Activated CD4-positive, alpha-beta T cell treated with anti-CD3 and anti-CD28 coated beads for 36 hours (primary cell): ENCODE measurements at regions of chr2 and their contacts with region 1.

Region 1: DNA sequence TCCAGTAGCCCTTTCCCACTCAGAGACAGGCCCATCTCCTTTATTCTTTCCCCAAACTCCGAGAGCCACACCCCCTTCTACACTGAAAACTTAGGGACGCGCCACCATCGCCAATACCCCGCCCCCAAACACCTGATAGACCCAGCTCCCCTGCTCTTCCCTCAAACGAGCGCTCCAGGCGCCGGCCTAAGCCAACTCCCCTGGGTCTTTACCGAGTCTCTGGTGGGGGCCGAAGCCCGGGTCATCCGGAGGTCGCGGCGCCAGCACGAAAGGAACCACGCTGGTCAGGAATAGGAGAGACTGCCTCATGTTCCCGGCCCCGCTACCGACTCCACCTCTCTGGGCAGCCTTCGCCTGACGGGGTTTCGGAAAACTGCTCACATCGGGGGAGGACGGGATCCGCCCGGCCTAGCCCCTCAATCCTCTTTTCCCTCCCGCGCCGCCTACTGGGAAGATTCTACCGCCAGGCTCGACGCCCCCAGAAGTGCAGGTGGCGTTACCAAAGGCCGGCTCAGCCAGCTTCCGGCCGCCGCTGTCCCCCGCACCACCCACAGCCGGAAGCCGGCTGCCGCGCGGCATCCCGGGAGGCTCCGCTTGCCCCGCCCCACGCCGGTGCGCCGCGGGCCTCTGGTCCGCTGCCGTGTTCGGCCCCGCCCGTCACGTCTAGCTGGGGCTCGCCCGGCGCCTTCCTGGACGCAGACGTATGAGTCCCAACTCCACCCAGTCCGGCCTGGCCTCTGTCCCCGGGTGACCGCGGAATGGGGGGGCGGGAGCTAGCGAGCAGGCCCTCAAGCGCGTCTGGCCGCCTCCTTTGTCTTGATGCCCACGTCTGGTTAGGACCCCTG is at the start of gene ADAM17:
- DNase-seq: peak; percentile 92
- ATAC-seq: peak; percentile 87
- H3K4me3 Mint-ChIP-seq: peak within 1 kb of the TSS; percentile 97
- H3K27ac Mint-ChIP-seq: peak within 1 kb of the TSS; percentile 95
- H3K4me1 Mint-ChIP-seq: peaks cover 50% of the 10 kb centered on the region
- H3K27me3 Mint-ChIP-seq: no peaks in the 10 kb centered on the region
- total RNA-seq, gene ADAM17: 20.2 to 23.1 TPM

Region 2: DNA sequence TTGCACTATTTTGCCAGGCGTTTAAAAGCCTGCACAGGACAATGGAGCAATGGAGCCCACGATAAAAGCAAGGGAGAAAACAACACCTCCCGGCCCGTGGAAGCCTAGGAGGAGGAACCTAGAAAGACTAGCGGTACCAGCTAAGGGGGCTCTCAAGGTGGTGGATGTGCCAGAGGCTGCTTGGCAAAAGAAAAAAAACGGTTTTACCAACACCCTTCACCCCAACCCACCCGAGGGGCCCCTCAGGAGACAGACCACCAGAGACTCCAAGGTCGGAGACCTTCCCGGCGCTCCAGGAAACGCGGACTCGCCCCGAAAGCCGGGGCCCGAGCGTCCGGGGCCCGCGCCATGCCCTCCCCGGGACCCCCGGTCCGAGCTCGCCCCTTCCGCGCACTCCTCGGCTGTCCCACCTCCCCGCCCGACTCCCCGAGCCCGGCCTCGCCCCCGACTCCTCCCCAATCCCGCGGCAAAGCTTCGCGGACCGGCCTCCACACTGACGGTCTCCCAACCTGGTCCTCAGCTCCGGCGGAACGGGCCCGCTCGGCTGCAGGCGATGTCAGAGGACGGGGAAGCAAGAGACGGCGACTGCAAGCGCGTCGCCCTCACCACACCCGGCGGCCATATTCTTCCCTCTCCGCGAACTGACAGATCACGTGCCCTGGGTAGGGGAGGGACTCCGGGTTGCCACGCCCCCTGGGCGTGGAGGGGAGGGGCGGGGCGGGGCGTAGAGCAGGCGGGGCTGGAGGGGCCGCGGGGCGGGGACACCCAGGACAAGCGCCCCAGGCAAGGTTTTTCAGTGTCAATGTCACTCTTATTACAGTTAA is 718.3 kb before region 1 on chr2 and contains the start of gene KIDINS220:
- CTCF ChIA-PET with region 1: no interaction called
- POLR2A ChIA-PET with region 1: no interaction called
- intact Hi-C with region 1: loop called in 1 of 2 experiments (anchors 5 kb)
- DNase-seq: peak; percentile 92
- ATAC-seq: peak; percentile 95
- H3K4me3 Mint-ChIP-seq: peak within 1 kb of the TSS; percentile 99
- H3K27ac Mint-ChIP-seq: peak within 1 kb of the TSS; percentile 98
- H3K4me1 Mint-ChIP-seq: peaks cover 39% of the 10 kb centered on the region
- H3K27me3 Mint-ChIP-seq: no peaks in the 10 kb centered on the region
- total RNA-seq, gene KIDINS220: 22.7 to 24.4 TPM

Region 3: GRCh38 chr2:9310377-9310776 is 245.1 kb before region 1 on chr2:
- CTCF ChIA-PET with region 1: no interaction called
- POLR2A ChIA-PET with region 1: no interaction called
- intact Hi-C with region 1: no loop called
- DNase-seq: no peak
- ATAC-seq: no peak
- H3K4me3 Mint-ChIP-seq: no peak overlapping the region
- H3K27ac Mint-ChIP-seq: no peak overlapping the region
- H3K4me1 Mint-ChIP-seq: peaks cover 2% of the 10 kb centered on the region
- H3K27me3 Mint-ChIP-seq: no peaks in the 10 kb centered on the region

Region 4: GRCh38 chr2:9474361-9474967 is 81.1 kb before region 1 on chr2 and contains the start of gene IAH1:
- CTCF ChIA-PET with region 1: interaction called, 3 read pairs
- POLR2A ChIA-PET with region 1: no interaction called
- intact Hi-C with region 1: loop called in 1 of 2 experiments (anchors 1 kb)
- DNase-seq: peak; percentile 81
- ATAC-seq: peak; percentile 81
- H3K4me3 Mint-ChIP-seq: peak within 1 kb of the TSS; percentile 79
- H3K27ac Mint-ChIP-seq: peak within 1 kb of the TSS; percentile 75
- H3K4me1 Mint-ChIP-seq: peaks cover 42% of the 10 kb centered on the region
- H3K27me3 Mint-ChIP-seq: no peaks in the 10 kb centered on the region
- total RNA-seq, gene IAH1: 53.7 to 63.7 TPM

Region 5: DNA sequence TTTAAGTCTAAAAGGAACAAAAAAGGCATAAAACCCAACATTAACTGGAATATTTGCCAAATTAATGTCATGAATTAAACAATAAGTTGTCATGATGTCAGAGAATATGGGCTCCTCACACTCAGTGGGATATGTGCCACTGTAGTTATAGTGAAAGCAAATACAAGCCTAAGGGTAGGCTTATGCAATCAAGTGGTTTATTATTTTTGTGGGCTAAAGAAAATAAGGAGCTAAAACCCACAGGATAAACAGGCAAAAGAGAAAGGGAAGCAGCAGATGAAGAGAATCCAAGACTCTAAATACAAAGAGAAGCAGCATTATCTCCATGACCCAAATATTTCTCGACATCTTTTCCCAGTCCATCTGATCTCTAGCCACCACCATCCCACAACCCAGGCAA is 57.8 kb after region 1 on chr2:
- CTCF ChIA-PET with region 1: interaction called, 3 read pairs
- POLR2A ChIA-PET with region 1: interaction called, 10 read pairs
- intact Hi-C with region 1: loop called (anchors 1 to 2 kb)
- DNase-seq: no peak
- ATAC-seq: no peak
- H3K4me3 Mint-ChIP-seq: no peak overlapping the region
- H3K27ac Mint-ChIP-seq: peak overlapping the region; percentile 27
- H3K4me1 Mint-ChIP-seq: peaks cover 95% of the 10 kb centered on the region
- H3K27me3 Mint-ChIP-seq: no peaks in the 10 kb centered on the region

Region 6: DNA sequence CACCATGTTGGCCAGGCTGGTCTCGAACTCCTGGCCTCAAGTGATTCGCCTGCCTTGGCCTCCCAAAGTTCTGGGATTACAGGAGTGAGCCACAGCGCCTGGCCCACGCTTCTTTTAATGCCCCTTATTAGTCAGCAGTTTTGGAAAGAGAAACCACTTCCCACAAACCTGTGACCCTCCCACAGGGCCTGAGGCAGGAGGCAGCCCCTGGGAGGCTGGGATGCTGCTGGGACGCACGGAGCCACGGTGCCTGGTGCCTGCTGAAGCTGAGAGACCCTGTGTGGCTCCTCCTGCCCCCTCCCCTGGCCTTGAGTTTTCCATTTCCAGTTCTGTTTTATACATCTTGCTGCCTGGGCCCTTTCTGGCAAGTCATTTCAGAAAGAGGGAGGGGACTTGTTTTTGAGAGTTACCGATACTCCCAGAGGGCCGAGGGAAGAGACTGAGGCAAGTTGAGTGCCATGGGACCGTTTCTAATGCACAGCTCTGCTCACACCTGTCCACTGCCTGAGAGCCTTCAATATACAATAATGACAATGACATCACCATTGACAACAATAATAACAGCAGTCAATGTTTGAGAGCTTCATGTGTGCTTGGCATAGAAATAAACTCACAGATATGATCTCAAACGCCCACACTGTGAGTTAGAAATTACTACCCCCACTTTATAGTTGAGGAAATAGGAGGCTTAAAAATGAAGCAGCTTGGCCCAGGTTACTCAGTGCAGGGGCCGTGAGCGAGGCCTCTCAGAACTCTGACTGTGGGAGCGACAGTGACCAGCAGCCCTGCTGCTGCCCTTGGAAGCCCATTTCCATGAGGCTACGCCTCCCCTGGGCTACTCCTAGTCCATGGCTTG is 153.4 kb after region 1 on chr2:
- CTCF ChIA-PET with region 1: no interaction called
- POLR2A ChIA-PET with region 1: interaction called, 4 read pairs
- intact Hi-C with region 1: loop called (anchors 1 to 2 kb)
- DNase-seq: peak; percentile 71
- ATAC-seq: peak; percentile 63
- H3K4me3 Mint-ChIP-seq: peak overlapping the region; percentile 10
- H3K27ac Mint-ChIP-seq: peak overlapping the region; percentile 92
- H3K4me1 Mint-ChIP-seq: peaks cover 56% of the 10 kb centered on the region
- H3K27me3 Mint-ChIP-seq: no peaks in the 10 kb centered on the region

Region 7: DNA sequence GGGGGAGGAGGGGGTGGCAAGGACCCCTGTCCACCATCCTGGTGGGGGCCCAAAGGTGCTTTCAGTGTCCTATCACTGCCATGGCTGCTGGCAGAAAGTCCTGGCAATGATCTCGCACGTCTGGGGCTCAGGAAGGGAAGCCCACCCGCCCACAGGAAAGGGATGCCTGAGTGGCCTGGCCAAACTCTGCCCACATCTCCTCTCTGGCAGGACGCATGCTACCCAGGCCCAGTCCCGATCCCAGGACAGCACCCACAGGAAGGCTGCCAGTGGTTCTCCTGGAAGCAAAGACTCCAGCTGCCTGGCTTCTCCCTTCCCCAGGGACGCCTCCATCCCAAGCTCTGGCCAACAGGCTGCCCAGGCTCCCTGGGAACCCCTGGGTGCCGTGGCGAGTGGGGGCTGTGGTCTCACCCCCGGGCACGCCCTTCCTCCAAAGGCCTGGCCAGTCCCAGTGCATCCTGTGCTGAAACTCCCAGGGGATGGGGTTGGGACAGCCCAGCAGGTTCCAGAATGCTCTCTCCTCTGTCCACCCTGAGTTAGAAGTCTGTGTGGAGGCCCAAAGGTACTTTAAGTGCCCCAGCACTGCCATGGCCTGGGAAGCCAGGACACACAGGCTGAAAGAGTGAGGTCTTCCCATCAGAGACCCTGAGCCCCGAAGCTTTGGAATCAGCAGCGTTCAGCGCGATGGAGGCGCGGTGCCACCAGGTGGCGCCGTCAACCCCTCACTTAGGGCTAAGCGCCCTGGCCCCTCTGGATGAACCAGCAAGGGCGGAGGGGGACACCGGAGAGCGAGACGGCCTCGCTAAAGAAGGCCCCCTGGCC is 258.0 kb after region 1 on chr2:
- CTCF ChIA-PET with region 1: no interaction called
- POLR2A ChIA-PET with region 1: no interaction called
- intact Hi-C with region 1: no loop called
- DNase-seq: peak; percentile 84
- ATAC-seq: peak; percentile 90
- H3K4me3 Mint-ChIP-seq: no peak overlapping the region
- H3K27ac Mint-ChIP-seq: no peak overlapping the region
- H3K4me1 Mint-ChIP-seq: peaks cover 9% of the 10 kb centered on the region
- H3K27me3 Mint-ChIP-seq: peaks cover 3% of the 10 kb centered on the region

Region 8: GRCh38 chr2:9843229-9844035 is 287.9 kb after region 1 on chr2 and contains the start of gene TAF1B:
- CTCF ChIA-PET with region 1: no interaction called
- POLR2A ChIA-PET with region 1: no interaction called
- intact Hi-C with region 1: loop called in 1 of 2 experiments (anchors 1 kb)
- DNase-seq: peak; percentile 93
- ATAC-seq: peak; percentile 80
- H3K4me3 Mint-ChIP-seq: peak within 1 kb of the TSS; percentile 89
- H3K27ac Mint-ChIP-seq: peak within 1 kb of the TSS; percentile 85
- H3K4me1 Mint-ChIP-seq: peaks cover 37% of the 10 kb centered on the region
- H3K27me3 Mint-ChIP-seq: no peaks in the 10 kb centered on the region
- total RNA-seq, gene TAF1B: 28.7 to 28.8 TPM